ENCODE measurements at regions of chr1 and their contacts with region 1.

Region 1: DNA sequence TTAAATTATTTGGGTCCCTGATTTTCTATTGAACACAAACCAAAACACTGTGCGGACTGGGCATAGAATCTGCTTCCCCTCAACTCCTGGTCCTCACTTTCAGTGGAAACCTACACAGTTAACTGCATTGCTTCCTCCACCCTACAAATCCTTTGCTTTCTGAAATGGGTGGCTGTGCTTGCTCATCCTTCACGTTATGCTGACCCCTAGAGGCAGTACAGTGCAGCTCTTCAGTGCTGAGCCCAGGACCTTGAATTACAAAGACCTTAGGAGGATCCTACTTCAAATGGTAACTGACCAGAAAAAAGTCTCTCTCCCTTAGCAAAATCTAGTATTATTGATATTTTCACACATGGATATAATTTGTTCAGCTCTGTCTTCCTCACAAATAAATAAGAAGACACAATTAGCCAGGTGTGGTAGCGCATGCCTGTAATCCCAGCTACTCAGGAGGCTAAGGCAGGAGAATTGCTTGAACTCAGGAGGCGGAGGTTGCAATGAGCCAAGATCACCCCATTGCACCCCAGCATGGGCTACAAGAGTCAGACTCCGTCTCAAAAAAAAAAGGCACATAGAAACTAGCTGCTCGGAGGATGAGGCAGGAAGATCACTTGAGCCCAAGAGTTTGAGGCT is 63.4 kb upstream of the L1TD1 start:
- DNase-seq: no peak
- H3K4me3 ChIP-seq: no peak overlapping the region
- CTCF ChIP-seq: peak; percentile 91

Region 2: GRCh38 chr1:62117018-62117750 is 14.0 kb before region 1 on chr1:
- CTCF ChIA-PET with region 1: interaction called, 12 read pairs
- POLR2A ChIA-PET with region 1: no interaction called
- DNase-seq: no peak
- H3K4me3 ChIP-seq: no peak overlapping the region
- CTCF ChIP-seq: no peak

Region 3: DNA sequence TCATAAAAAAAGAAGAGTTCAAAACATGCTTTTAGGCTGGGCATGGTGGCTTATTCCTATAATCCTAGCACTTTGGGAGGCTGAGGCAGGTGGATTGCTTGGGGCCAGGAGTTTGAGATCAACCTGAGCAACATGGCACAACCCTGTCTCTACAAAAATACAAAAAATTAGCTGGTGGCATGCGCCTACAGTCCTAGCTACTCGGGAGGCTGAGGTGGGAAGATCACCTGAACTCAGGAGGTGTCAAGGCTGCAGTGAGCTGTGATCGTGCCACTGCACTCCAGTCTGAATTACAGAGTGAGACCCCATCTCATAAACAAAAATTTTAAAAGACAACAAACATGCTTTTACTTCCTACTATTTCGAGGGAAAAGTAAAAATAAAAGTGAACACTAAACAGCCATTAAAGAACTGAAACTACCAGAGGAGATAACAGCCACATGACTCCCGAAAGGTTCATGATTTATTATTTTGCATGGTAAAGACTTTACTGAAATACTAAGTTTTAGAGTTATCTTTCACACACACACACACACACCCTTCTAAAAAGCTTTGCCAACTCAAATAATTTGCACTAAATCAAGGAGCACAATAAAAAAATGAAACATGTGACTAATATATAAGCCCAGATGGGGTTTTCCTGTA is 353.7 kb after region 1 on chr1:
- CTCF ChIA-PET with region 1: no interaction called
- POLR2A ChIA-PET with region 1: no interaction called
- DNase-seq: no peak
- H3K4me3 ChIP-seq: no peak overlapping the region
- CTCF ChIP-seq: no peak